Caco-2 (cell line): ENCODE measurements at regions of chr1 and their contacts with region 1.

Region 1: DNA sequence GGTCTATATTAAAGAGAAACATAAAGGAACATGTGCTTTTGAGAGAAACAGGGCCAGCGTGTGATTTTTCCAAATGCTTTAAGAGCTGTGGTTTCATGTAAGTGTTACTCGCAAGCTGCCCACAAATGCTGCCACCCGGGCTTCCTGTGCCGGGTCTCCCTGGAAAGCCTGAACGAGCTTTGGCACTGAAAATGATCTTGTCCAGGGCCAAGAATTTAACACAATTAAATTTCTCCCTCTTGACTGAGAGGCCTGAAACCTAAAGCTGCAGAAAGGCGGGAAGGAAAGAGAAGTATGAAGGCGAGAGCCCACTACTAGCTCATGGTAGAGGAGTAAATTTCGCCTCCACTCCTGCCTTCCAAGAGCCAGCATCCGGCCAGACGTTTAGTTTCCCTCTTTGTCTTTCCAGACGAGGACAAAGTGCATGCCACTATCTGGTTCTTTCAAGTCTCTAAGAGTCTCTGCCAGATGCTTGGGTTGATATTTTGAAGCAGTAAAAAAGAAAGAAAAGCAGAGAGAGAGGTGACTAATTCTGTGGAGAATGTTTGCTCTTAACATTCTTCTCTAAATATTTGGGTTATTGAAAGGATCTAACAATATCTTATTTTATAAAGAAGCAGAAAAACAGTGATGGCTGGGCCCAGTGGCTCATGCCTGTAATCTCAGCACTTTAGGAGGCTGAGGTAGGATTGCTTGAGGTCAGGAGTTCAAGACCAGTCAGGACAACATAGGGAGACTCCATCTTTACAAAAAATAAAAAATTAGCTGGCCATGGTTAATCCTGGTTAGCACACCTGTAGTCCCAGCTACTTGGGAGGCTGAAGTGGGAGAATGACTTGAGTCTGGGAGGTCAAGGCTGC is 100.0 kb upstream of the HNRNPU start:
- DNase-seq: peak; percentile 73 to 76
- H3K4me3 ChIP-seq: 0 out of 2 replicates have a peak overlapping the region, but pooled peaks have one; percentile 8
- H3K4me3 Mint-ChIP-seq: peak overlapping the region; percentile 55
- H3K27ac Mint-ChIP-seq: peak overlapping the region; percentile 71
- H3K4me1 ChIP-seq: peaks cover 43% of the 10 kb centered on the region
- H3K4me1 Mint-ChIP-seq: peaks cover 19% of the 10 kb centered on the region
- H3K27me3 ChIP-seq: no peaks in the 10 kb centered on the region
- H3K27me3 Mint-ChIP-seq: no peaks in the 10 kb centered on the region
- CTCF ChIP-seq: no peak

Region 2: DNA sequence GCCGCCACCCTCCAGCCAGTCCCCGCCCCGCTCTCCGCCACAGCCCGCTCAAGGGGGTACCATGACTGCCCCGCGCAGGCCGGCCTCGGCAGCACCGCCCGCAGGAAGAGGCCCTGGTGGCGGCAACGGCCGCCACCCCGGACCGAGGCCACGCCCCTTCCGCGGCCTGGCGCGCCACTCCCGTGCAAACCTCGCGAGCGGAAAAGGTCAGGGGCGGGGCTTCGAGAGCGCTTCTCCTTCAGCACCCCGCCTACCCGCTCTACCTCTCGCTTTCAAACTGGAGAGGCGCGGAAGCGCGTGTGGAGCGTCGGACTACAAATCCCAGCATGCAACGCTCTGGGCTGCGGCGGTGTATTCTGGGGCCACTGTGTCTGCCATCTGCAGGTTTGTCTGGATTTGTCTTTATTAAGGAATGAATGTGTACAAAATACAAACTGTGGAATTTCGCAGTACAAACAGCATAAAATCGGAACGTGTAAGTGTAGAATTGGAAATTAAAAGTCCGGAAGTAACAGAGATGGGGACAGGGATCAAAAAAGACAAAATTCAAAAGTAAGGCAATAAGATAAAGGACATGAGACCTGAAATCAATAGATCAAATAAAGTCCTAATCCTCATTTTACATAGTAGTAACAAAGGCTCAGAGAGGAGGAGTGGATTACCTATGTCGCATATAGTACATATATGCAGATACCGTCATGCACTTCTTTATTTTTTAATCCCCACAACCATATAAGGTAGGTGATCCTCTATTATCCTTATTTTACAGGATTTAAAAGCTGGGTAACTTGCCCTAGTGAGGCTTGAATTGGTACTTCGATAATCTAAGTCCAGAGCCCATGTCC is 512.2 kb before region 1 on chr1:
- CTCF ChIA-PET with region 1: no interaction called
- POLR2A ChIA-PET with region 1: no interaction called
- intact Hi-C with region 1: loop called (anchors 5 kb)
- DNase-seq: peak; percentile 98 to 99
- H3K4me3 ChIP-seq: peak overlapping the region; percentile 96
- H3K4me3 Mint-ChIP-seq: peak overlapping the region; percentile 76
- H3K27ac Mint-ChIP-seq: peak overlapping the region; percentile 75
- H3K4me1 ChIP-seq: peaks cover 38% of the 10 kb centered on the region
- H3K4me1 Mint-ChIP-seq: peaks cover 49% of the 10 kb centered on the region
- H3K27me3 ChIP-seq: no peaks in the 10 kb centered on the region
- H3K27me3 Mint-ChIP-seq: no peaks in the 10 kb centered on the region
- CTCF ChIP-seq: peak; percentile 30 to 33

Region 3: GRCh38 chr1:244918421-244919319 is 45.7 kb before region 1 on chr1:
- CTCF ChIA-PET with region 1: interaction called, 3 read pairs
- POLR2A ChIA-PET with region 1: interaction called, 8 read pairs
- intact Hi-C with region 1: loop called (anchors 2 kb)
- DNase-seq: peak; percentile 45 to 64
- H3K4me3 ChIP-seq: peak overlapping the region; percentile 82
- H3K4me3 Mint-ChIP-seq: peak overlapping the region; percentile 84
- H3K27ac Mint-ChIP-seq: peak overlapping the region; percentile 33
- H3K4me1 ChIP-seq: peaks cover 4% of the 10 kb centered on the region; the same call in 1 of the 2 replicates
- H3K4me1 Mint-ChIP-seq: peaks cover 6% of the 10 kb centered on the region
- H3K27me3 ChIP-seq: no peaks in the 10 kb centered on the region
- H3K27me3 Mint-ChIP-seq: no peaks in the 10 kb centered on the region
- CTCF ChIP-seq: no peak

Region 4: DNA sequence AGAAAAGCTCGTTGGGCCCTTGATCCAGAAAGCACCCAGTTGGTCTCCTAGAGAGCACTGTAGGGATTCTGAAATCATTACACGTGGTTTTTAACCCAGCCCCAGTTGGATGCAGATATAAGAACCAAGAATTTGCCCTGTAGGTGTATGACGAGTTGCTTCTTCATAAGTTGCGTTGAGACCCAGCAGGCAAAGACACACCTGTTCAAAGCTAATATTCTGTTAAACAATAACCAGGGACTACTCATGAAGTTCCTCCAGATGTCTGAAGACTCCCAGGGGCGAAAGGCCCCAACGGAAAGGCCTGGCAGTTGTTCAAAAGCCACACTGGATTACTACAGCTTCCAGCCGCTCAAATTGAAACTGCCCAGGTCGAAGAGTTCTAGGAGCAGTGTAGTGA is 11.4 kb before region 1 on chr1:
- CTCF ChIA-PET with region 1: interaction called, 3 read pairs
- POLR2A ChIA-PET with region 1: interaction called, 16 read pairs
- intact Hi-C with region 1: loop called (anchors 1 kb)
- DNase-seq: peak; percentile 78 to 84
- H3K4me3 ChIP-seq: no peak overlapping the region
- H3K4me3 Mint-ChIP-seq: peak overlapping the region; percentile 34
- H3K27ac Mint-ChIP-seq: peak overlapping the region; percentile 55
- H3K4me1 ChIP-seq: peaks cover 21% of the 10 kb centered on the region
- H3K4me1 Mint-ChIP-seq: peaks cover 11% of the 10 kb centered on the region
- H3K27me3 ChIP-seq: no peaks in the 10 kb centered on the region
- H3K27me3 Mint-ChIP-seq: no peaks in the 10 kb centered on the region
- CTCF ChIP-seq: no peak

Region 5: DNA sequence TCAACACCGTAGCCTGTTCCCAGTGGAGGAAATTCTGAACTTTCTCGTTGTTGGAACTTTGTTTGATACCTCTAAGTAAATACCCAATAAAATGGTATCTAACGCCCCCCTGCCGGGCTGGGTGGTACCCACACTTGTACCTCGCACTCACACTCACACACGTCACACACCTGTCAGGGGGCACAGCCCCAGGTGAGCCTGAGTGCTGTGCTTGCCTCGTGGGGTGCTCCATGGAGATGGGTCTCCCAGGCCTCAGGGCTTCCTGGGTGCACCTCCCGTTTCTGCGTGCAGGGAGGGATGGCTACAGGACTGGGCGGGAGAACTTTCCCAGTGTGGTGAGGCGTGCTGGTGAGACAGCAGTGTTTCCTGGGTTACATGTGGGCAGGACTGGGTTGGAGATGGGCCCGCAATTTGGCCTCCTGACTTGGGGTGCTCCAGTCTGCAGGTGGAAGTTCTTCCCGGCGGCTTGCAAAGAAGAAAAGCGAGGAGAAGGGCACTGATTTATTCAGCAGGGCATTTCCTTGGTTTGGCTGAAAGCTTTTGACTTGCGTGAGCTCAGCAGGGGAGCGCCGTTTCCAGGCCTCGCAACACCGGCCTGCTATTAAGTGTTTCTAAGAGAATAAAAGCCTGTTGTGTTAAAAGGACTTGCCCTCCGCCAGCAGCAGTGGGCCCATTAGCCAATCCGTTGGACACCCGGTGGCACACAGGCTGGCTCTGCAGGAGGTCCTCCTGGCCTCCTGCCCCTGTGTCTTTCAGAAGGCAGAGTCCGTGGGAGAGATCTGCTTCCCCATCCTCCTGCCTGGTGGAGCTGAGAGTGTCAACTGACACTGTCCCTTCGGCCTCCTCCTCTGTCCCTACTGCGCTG is 270.1 kb after region 1 on chr1:
- CTCF ChIA-PET with region 1: no interaction called
- POLR2A ChIA-PET with region 1: no interaction called
- intact Hi-C with region 1: no loop called
- DNase-seq: no peak
- H3K4me3 ChIP-seq: no peak overlapping the region
- H3K4me3 Mint-ChIP-seq: no peak overlapping the region
- H3K27ac Mint-ChIP-seq: no peak overlapping the region
- H3K4me1 ChIP-seq: no peaks in the 10 kb centered on the region
- H3K4me1 Mint-ChIP-seq: no peaks in the 10 kb centered on the region
- H3K27me3 ChIP-seq: no peaks in the 10 kb centered on the region
- H3K27me3 Mint-ChIP-seq: no peaks in the 10 kb centered on the region
- CTCF ChIP-seq: no peak